ENCODE measurements at regions of chr4 and their contacts with region 1.

Region 1: DNA sequence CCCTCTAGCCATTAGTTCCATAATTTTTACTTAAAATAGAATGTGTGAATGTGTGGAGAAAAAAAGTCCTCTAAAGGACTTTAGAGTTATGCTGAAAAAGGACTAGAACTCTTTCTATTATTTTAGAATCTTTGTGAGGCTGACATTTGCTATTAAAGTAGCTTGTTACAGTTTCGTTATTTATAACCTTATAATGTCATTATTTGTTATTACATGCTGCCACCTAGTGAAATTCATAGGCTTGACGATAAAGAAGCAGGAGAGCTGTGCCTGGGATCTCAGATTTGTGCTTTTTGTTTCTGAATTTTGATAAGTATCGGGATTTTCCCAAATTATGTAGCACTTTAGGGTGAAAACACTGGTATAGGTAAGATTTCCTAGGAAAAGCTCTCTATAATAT is 38.5 kb upstream of the TAPT1 start:
- DNase-seq: no peak

Region 2: GRCh38 chr4:16026160-16026761 is 238.5 kb before region 1 on chr4:
- intact Hi-C with region 1: loop called (anchors 2 kb)
- DNase-seq: no peak